Vagina (tissue), 2 donors: ENCODE measurements at regions of chr3 and their contacts with region 1.

Region 1: DNA sequence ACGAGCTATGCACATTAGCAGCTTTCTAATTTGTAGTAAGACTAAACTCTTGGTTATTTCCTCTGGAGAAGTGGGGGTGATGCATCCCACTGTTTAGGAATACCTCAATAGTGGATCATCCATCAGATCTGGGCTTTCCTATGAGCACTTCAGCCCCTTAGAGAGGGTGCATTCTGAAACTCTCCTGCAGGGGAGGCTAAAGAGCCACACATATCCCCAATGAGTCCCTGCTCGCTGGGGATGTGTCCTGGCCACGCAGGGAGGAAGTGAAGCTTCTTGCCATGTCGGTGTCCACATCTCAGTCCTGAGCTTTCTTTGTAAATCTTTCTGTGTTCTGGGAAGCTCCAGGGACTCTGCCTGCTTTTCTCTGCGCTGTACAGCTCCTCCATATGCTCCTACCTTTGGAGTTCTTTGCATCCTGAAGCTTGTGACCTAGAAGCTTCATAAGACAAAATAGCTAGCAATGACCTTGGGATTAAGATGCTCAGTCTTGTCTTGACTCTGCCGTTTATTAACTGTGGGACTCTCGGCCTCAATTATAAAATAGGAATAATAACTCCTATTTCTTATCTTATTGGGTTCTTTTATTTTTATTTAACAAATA is 28.3 kb upstream of the MASP1 start:
- DNase-seq: peak in 1 of 2 donors; percentile 25
- H3K4me3 ChIP-seq: peak overlapping the region in 1 of 2 donors; percentile 41
- H3K27ac ChIP-seq: no peak overlapping the region
- H3K4me1 ChIP-seq: peaks cover 9% of the 10 kb centered on the region
- H3K27me3 ChIP-seq: no peaks in the 10 kb centered on the region
- CTCF ChIP-seq: peak; percentile 56 to 87 (median 63)
- POLR2A ChIP-seq: no peak

Region 2: GRCh38 chr3:187227658-187228258 is 92.0 kb before region 1 on chr3:
- intact Hi-C with region 1: loop called (anchors 10 kb)
- DNase-seq: no peak
- H3K4me3 ChIP-seq: no peak overlapping the region
- H3K27ac ChIP-seq: no peak overlapping the region
- H3K4me1 ChIP-seq: no peaks in the 10 kb centered on the region
- H3K27me3 ChIP-seq: no peaks in the 10 kb centered on the region
- CTCF ChIP-seq: no peak
- POLR2A ChIP-seq: no peak

Region 3: GRCh38 chr3:187550446-187550845 is 230.6 kb after region 1 on chr3:
- intact Hi-C with region 1: no loop called
- DNase-seq: no peak
- H3K4me3 ChIP-seq: no peak overlapping the region
- H3K27ac ChIP-seq: no peak overlapping the region
- H3K4me1 ChIP-seq: no peaks in the 10 kb centered on the region
- H3K27me3 ChIP-seq: no peaks in the 10 kb centered on the region
- CTCF ChIP-seq: no peak
- POLR2A ChIP-seq: no peak

Region 4: DNA sequence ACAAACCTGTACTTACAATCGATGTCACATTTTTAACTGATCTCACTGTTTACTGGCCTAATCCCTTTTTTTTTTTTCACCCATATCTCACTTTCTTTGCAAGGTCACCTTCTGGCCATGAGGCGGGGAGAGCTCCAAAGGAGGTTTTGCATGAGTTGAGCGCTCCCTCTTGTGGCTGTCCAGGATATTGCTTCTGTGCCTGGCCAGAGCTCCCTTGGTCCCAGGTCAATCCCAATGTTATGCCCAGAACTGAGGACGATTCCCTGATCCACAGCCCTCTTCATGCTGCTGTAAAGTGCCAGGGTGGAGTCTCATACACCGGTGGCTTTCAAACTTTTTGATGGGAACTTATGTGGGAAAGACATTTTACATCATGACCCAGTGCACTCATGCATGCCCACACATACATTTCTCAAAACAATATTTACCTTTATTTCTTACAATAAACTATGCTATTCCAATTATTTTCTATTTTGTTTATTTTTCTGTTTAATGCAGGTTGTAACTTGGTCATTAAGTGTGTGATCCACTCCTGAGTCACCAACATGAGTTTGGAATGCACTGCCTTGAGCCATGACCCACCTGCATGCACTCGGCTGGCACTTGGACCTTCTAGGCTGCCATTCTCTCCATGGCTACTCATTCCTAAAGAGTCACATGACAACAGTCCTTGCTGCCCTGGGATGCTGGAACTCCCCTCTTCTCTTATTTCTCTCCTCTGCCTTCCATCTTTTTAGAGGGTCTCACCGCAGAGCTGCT is 360.0 kb after region 1 on chr3:
- intact Hi-C with region 1: loop called (anchors 5 kb)
- DNase-seq: no peak
- H3K4me3 ChIP-seq: no peak overlapping the region
- H3K27ac ChIP-seq: no peak overlapping the region
- H3K4me1 ChIP-seq: no peaks in the 10 kb centered on the region
- H3K27me3 ChIP-seq: no peaks in the 10 kb centered on the region
- CTCF ChIP-seq: peak; percentile 74 to 92 (median 83)
- POLR2A ChIP-seq: no peak